ENCODE measurements at regions of chr22 and their contacts with region 1.

Region 1: GRCh38 chr22:25772288-25772687 is 30.3 kb downstream of the MYO18B start:
- DNase-seq: no peak
- H3K4me3 ChIP-seq: no peak overlapping the region
- H3K27ac ChIP-seq: no peak overlapping the region
- H3K4me1 ChIP-seq: no peaks in the 10 kb centered on the region
- H3K27me3 ChIP-seq: no peaks in the 10 kb centered on the region
- CTCF ChIP-seq: no peak

Region 2: GRCh38 chr22:25202290-25202921 is 569.9 kb before region 1 on chr22:
- CTCF ChIA-PET with region 1: no interaction called
- POLR2A ChIA-PET with region 1: no interaction called
- intact Hi-C with region 1: loop called (anchors 2 kb)
- DNase-seq: peak; percentile 75
- H3K4me3 ChIP-seq: no peak overlapping the region
- H3K27ac ChIP-seq: no peak overlapping the region
- H3K4me1 ChIP-seq: no peaks in the 10 kb centered on the region
- H3K27me3 ChIP-seq: no peaks in the 10 kb centered on the region
- CTCF ChIP-seq: peak; percentile 90

Region 3: DNA sequence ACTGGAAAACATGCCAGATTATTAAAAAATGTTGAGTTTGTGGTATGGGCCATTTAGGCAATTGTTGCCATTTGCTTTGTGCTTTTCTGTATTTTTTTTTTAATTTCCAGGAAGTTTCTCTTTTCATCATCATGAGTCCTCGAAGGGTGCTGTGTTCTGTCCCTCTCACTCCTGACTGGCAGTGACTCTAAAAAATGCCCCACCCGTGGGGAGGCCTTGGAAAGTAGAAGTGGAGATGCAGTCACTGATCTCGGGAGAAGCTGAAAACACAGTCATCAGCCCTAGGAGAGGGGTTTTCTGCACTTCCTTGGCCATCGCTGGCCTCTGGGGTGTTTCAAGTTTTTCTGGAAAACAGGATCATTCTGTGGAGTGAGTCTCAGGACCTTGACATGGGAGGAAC is 306.3 kb before region 1 on chr22:
- CTCF ChIA-PET with region 1: interaction called, 11 read pairs
- POLR2A ChIA-PET with region 1: no interaction called
- intact Hi-C with region 1: loop called (anchors 1 kb)
- DNase-seq: no peak
- H3K4me3 ChIP-seq: no peak overlapping the region
- H3K27ac ChIP-seq: no peak overlapping the region
- H3K4me1 ChIP-seq: no peaks in the 10 kb centered on the region
- H3K27me3 ChIP-seq: no peaks in the 10 kb centered on the region
- CTCF ChIP-seq: no peak